ENCODE measurements at regions of chr1 and their contacts with region 1.

Region 1: DNA sequence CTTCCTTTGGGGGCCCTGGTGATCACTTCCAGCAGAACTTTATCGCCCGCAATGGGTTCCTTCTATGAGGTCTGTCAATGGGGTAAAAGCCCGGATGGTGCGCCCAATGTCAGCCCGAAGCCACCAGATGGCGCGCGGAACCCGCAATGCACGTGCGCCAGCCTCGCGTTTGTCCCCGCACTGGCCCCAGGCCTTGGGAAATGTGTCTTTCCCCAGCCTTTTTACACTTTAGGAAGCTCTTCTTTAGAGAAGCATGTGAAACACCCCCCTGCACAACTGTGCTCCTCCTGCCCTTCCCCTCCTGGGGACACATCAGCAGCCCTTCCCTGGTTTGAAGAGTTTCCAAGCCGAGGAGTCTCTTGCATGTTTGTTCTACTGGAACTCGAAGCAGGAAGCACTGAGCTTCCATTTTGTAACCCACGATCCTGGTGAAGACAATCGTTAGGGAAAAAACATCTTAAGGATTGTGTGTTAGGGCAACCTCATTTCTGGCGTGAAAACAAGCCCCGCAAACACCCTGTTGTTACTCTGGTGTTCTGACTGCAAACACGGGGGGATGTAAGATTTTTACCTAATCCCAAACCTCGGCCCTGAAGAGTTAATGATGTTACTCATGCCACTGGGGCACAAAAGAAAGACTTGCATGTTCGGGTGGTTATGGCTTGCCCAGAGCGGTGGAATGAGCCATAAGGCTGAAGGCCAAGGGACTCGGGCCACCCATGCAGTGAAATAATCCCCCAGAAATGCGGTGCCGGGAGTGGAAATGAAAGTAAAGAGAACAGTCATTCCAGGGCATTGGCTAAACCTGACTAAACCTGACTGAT is 20.4 kb upstream of the TARBP1 start:
- DNase-seq: peak; percentile 85
- H3K4me3 ChIP-seq: peak overlapping the region in 1 of 2 experiments; percentile 21; a peak in 1 of 4 replicates
- H3K27ac ChIP-seq: peak overlapping the region; percentile 71 to 81
- H3K4me1 ChIP-seq: peaks cover 23 to 36% of the 10 kb centered on the region in 2 experiments; a peak in 3 of 4 replicates
- H3K27me3 ChIP-seq: no peaks in the 10 kb centered on the region
- CTCF ChIP-seq: peak; percentile 95
- EP300 ChIP-seq: no peak
- RAD21 ChIP-seq: peak; percentile 99

Region 2: DNA sequence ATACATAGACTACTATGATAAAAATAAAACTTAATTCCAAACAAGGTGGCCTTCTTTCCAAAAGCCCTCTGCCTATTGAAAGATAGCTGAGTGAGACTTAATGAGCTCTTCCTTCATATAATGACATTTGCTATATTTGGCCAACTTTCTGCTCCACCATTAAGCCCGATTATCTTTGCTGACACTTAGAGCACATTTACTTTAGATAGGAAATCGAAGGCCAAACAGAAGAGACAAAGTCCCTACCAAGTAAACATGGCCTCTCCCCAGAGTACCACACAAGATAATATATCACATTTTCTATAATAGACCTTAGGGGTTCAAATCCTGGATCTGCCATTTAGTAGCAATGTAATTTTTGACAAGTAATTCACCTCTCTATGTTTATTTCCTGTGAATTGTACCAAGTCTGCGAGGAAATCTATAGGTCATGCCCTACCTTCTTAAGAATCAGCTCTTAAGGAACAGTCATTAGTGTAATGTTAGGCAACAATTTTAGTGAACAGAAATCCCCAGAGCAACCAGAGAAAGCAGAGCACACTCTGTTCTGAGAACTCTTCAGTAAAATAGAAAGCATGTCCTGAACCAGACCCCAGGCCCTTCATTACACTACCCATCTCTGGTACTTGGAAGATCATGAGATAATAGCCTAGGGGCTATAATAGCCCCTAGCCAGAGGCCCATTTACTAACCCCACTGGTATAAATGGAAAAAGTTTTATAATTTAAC is 143.4 kb before region 1 on chr1:
- CTCF ChIA-PET with region 1: no interaction called
- POLR2A ChIA-PET with region 1: no interaction called
- DNase-seq: peak; percentile 21
- H3K4me3 ChIP-seq: peak overlapping the region in 1 of 2 experiments; percentile 51; a peak in 1 of 4 replicates
- H3K27ac ChIP-seq: no peak overlapping the region
- H3K4me1 ChIP-seq: no peaks in the 10 kb centered on the region; a peak in 1 of 4 replicates
- H3K27me3 ChIP-seq: no peaks in the 10 kb centered on the region
- CTCF ChIP-seq: no peak
- EP300 ChIP-seq: no peak
- RAD21 ChIP-seq: no peak

Region 3: GRCh38 chr1:234509452-234510328 is 10.4 kb after region 1 on chr1:
- CTCF ChIA-PET with region 1: interaction called, 29 read pairs
- POLR2A ChIA-PET with region 1: interaction called, 3 read pairs
- DNase-seq: no peak
- H3K4me3 ChIP-seq: no peak overlapping the region
- H3K27ac ChIP-seq: no peak overlapping the region
- H3K4me1 ChIP-seq: peaks cover 6 to 28% of the 10 kb centered on the region in 2 experiments; a peak in 2 of 4 replicates
- H3K27me3 ChIP-seq: no peaks in the 10 kb centered on the region
- CTCF ChIP-seq: no peak
- EP300 ChIP-seq: no peak
- RAD21 ChIP-seq: no peak

Region 4: DNA sequence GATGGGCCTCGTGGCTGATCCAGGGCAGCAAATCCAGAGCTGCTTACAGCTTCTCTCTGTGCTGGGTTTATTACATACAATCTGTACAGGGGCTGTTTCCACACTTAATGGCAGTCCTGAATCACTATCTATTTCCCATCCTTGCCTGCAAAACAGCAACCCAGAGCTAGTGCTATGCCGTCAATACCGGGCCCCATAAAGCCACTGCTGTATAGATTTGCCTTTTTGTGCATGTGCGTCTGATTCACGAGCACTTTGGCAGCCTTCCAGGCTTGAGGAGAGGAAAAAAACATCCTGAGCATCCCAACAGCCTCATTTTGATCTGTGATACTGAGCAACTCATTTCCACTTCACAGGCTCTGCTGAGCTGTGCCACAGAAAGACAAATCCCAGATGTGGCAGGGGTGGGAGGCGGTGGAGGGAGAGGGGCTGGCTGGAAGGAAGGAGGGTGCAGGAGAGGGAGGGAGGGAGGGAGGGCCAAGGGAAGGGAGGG is 44.8 kb after region 1 on chr1:
- CTCF ChIA-PET with region 1: interaction called, 37 read pairs
- POLR2A ChIA-PET with region 1: interaction called, 9 read pairs
- DNase-seq: peak; percentile 86
- H3K4me3 ChIP-seq: no peak overlapping the region; a peak in 1 of 4 replicates
- H3K27ac ChIP-seq: peak overlapping the region; percentile 92 to 100
- H3K4me1 ChIP-seq: peaks cover 23 to 67% of the 10 kb centered on the region in 2 experiments
- H3K27me3 ChIP-seq: no peaks in the 10 kb centered on the region
- CTCF ChIP-seq: no peak
- EP300 ChIP-seq: peak; percentile 88 to 94
- RAD21 ChIP-seq: peak; percentile 30; the same call in 1 of the 2 replicates

Region 5: DNA sequence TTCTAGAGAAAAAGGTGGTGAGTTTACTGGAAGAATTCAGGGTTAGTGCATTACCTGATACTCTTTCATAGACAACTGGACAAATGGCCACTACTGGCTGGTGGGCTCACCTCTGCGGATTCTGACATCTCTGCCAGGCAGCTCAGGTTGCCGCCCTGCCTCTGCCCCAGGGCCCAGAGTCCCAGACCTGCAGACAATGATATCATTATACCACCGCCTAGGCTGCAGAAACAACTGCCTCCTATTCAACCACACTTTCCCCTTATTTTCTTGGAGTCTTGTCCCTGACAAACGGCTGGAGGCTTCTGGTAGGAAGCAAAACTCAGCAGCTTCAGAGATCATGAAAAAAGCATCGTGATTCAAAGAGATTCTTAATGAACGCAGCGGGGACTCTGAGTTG is 73.6 kb after region 1 on chr1:
- CTCF ChIA-PET with region 1: interaction called, 13 read pairs
- POLR2A ChIA-PET with region 1: no interaction called
- DNase-seq: no peak
- H3K4me3 ChIP-seq: no peak overlapping the region
- H3K27ac ChIP-seq: peak overlapping the region in 1 of 2 experiments; percentile 97; a peak in 2 of 4 replicates
- H3K4me1 ChIP-seq: peaks cover 0 to 35% of the 10 kb centered on the region in 2 experiments; a peak in 2 of 4 replicates
- H3K27me3 ChIP-seq: no peaks in the 10 kb centered on the region
- CTCF ChIP-seq: no peak
- EP300 ChIP-seq: no peak
- RAD21 ChIP-seq: no peak

Region 6: DNA sequence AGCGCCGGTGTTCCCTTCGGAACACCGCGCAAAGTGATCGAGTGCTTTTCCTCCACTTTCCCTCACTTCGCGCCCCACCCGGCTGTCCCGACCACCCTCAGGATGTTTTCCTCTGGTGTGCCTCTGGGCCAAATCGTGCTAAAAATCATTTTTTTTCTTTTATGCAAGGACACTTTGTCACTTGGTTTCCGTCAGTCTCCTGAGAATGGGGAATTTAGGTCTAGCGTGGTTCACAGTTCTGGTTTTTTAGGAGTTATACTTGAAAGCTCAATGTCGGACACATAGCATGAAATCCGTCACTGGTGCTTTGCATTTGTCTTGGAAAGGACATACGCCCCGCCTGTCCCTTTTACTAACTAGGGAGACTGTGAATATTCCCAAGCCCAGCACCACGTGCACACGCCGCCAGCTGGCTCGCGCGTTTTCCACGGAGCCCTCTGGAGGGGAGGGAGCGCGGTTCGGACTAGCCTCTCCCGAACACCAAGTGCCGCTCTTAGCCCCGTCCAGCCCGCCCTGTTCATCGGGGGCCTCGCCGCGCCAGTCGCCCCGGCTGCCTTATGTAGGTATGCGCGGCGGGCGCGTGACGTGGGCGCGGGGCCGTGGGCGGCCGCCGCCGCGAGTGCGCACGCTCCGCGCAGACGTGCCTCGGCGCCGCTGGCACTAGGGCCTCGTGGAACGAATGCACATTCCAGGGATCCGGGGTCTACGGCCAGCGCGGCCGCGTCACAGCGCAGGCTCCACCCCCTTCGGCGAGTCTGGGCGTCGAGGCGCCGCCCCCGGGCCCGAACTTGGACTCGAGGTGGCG is 111.2 kb after region 1 on chr1:
- CTCF ChIA-PET with region 1: interaction called, 73 read pairs
- POLR2A ChIA-PET with region 1: interaction called, 6 read pairs
- DNase-seq: peak; percentile 92
- H3K4me3 ChIP-seq: peak overlapping the region; percentile 69 to 83
- H3K27ac ChIP-seq: peak overlapping the region; percentile 100
- H3K4me1 ChIP-seq: peaks cover 34 to 46% of the 10 kb centered on the region in 2 experiments
- H3K27me3 ChIP-seq: no peaks in the 10 kb centered on the region
- CTCF ChIP-seq: no peak
- EP300 ChIP-seq: peak in 1 of 2 experiments; percentile 52; a peak in 2 of 4 replicates
- RAD21 ChIP-seq: no peak

Region 7: GRCh38 chr1:235093696-235094592 is 594.6 kb after region 1 on chr1:
- CTCF ChIA-PET with region 1: interaction called, 24 read pairs
- POLR2A ChIA-PET with region 1: interaction called, 3 read pairs
- DNase-seq: peak; percentile 83
- H3K4me3 ChIP-seq: no peak overlapping the region; a peak in 1 of 4 replicates
- H3K27ac ChIP-seq: no peak overlapping the region
- H3K4me1 ChIP-seq: peaks cover 4 to 8% of the 10 kb centered on the region in 2 experiments; a peak in 1 of 4 replicates
- H3K27me3 ChIP-seq: no peaks in the 10 kb centered on the region
- CTCF ChIP-seq: peak; percentile 96
- EP300 ChIP-seq: no peak
- RAD21 ChIP-seq: peak; percentile 88